GM12878 (cell line): ENCODE measurements at regions of chr19 and their contacts with region 1.

Region 1: DNA sequence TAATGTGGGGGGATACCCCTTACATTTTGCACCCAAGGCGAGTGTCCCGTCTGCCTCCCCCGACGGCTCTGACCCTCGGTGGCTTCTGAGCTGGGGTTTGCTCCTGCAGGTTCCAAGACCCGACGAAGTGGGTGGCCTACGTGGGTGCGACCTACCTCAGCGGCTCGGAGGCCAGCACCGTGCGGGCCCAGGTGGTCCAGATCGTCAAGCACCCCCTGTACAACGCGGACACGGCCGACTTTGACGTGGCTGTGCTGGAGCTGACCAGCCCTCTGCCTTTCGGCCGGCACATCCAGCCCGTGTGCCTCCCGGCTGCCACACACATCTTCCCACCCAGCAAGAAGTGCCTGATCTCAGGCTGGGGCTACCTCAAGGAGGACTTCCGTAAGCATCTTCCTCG is 19.1 kb downstream of the TIMM13 start:
- DNase-seq: no peak
- ATAC-seq: no peak
- H3K4me3 ChIP-seq: no peak overlapping the region
- H3K27ac ChIP-seq: no peak overlapping the region
- H3K4me1 ChIP-seq: no peaks in the 10 kb centered on the region
- H3K27me3 ChIP-seq: no peaks in the 10 kb centered on the region
- CTCF ChIP-seq: no peak
- EP300 ChIP-seq: no peak
- POLR2A ChIP-seq: peak; percentile 18; the same call in 1 of the 2 replicates
- RAD21 ChIP-seq: no peak

Region 2: GRCh38 chr19:2385053-2385721 is 23.1 kb before region 1 on chr19:
- CTCF ChIA-PET with region 1: no interaction called
- POLR2A ChIA-PET with region 1: no interaction called
- RAD21 ChIA-PET with region 1: no interaction called
- SMC1A ChIA-PET with region 1: no interaction called
- in situ Hi-C with region 1: no loop called
- intact Hi-C with region 1: no loop called
- DNase-seq: no peak
- ATAC-seq: no peak
- H3K4me3 ChIP-seq: no peak overlapping the region
- H3K27ac ChIP-seq: no peak overlapping the region
- H3K4me1 ChIP-seq: peaks cover 4% of the 10 kb centered on the region; the same call in 1 of the 2 replicates
- H3K27me3 ChIP-seq: no peaks in the 10 kb centered on the region; a peak in 1 of 4 replicates
- CTCF ChIP-seq: no peak
- EP300 ChIP-seq: no peak
- POLR2A ChIP-seq: no peak
- RAD21 ChIP-seq: no peak

Region 3: GRCh38 chr19:2438178-2438864 is 30.1 kb after region 1 on chr19:
- CTCF ChIA-PET with region 1: no interaction called
- POLR2A ChIA-PET with region 1: interaction called, 11 read pairs
- RAD21 ChIA-PET with region 1: no interaction called
- SMC1A ChIA-PET with region 1: no interaction called
- in situ Hi-C with region 1: no loop called
- intact Hi-C with region 1: no loop called
- DNase-seq: no peak
- ATAC-seq: no peak
- H3K4me3 ChIP-seq: no peak overlapping the region
- H3K27ac ChIP-seq: no peak overlapping the region
- H3K4me1 ChIP-seq: no peaks in the 10 kb centered on the region
- H3K27me3 ChIP-seq: no peaks in the 10 kb centered on the region
- CTCF ChIP-seq: no peak
- EP300 ChIP-seq: no peak
- POLR2A ChIP-seq: peak; percentile 30
- RAD21 ChIP-seq: no peak